CD14-positive monocyte (primary cell): ENCODE measurements at regions of chr6 and their contacts with region 1.

Region 1: DNA sequence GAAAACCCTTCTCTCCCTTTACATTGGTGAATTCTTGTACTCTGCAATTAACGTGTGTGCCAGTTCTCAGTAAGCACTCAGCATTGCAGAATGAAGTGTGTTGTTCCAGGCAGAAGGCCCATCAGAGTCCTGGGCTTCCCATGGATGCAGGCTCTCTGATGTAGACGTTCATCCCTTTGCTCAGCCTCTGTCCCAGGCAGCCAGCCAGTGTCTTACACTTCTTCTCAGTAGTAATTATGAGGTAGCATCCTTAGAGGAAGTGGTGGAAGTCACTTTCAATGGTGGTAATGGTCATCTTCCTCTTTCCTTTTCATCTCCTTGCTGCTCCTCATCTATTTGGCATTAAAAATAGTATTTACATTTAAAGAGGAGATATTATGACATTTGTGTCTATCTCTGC is 66.7 kb upstream of the FYN start:
- DNase-seq: peak; percentile 55 to 82 (median 73)
- H3K4me3 ChIP-seq: peak overlapping the region in 1 of 3 experiments; percentile 6
- H3K4me3 Mint-ChIP-seq: peak overlapping the region; percentile 39 to 67
- H3K27ac ChIP-seq: peak overlapping the region; percentile 15 to 87
- H3K27ac Mint-ChIP-seq: peak overlapping the region; percentile 76 to 94 (median 87)
- H3K4me1 ChIP-seq: peaks cover 59 to 61% of the 10 kb centered on the region in 2 donors
- H3K4me1 Mint-ChIP-seq: peaks cover 61% of the 10 kb centered on the region
- H3K27me3 ChIP-seq: no peaks in the 10 kb centered on the region
- H3K27me3 Mint-ChIP-seq: peaks cover 0 to 2% (median 0%) of the 10 kb centered on the region in 3 donors
- CTCF ChIP-seq: no peak

Region 2: GRCh38 chr6:111873178-111874024 is 66.5 kb before region 1 on chr6 and contains the start of gene FYN:
- intact Hi-C with region 1: loop called (anchors 5 to 10 kb)
- DNase-seq: peak; percentile 95 to 97 (median 96)
- H3K4me3 ChIP-seq: peak within 1 kb of the TSS; percentile 65 to 95 (median 89)
- H3K4me3 Mint-ChIP-seq: peak within 1 kb of the TSS; percentile 93 to 95
- H3K27ac ChIP-seq: peak within 1 kb of the TSS; percentile 71 to 88
- H3K27ac Mint-ChIP-seq: peak within 1 kb of the TSS; percentile 84 to 95 (median 93)
- H3K4me1 ChIP-seq: peaks cover 32 to 48% of the 10 kb centered on the region in 2 donors
- H3K4me1 Mint-ChIP-seq: peaks cover 48% of the 10 kb centered on the region
- H3K27me3 ChIP-seq: no peaks in the 10 kb centered on the region
- H3K27me3 Mint-ChIP-seq: no peaks in the 10 kb centered on the region
- CTCF ChIP-seq: peak; percentile 40
- polyA plus RNA-seq, gene FYN: 88.4 to 149 (median 114) TPM

Region 3: GRCh38 chr6:111973118-111973761 is 33.3 kb after region 1 on chr6:
- intact Hi-C with region 1: loop called in 1 of 2 experiments (anchors 1 kb)
- DNase-seq: peak; percentile 90 to 97 (median 92)
- H3K4me3 ChIP-seq: peak overlapping the region in 1 of 3 experiments; percentile 13
- H3K4me3 Mint-ChIP-seq: peak overlapping the region; percentile 42 to 53
- H3K27ac ChIP-seq: peak overlapping the region; percentile 97 to 99
- H3K27ac Mint-ChIP-seq: peak overlapping the region; percentile 98 to 100 (median 100)
- H3K4me1 ChIP-seq: peaks cover 64 to 67% of the 10 kb centered on the region in 2 donors
- H3K4me1 Mint-ChIP-seq: peaks cover 60% of the 10 kb centered on the region
- H3K27me3 ChIP-seq: no peaks in the 10 kb centered on the region
- H3K27me3 Mint-ChIP-seq: no peaks in the 10 kb centered on the region
- CTCF ChIP-seq: no peak